Activated naive CD4-positive, alpha-beta T cell treated with anti-CD3 and anti-CD28 coated beads, Interleukin-2, amount 10 ng/mL, durations not matched to agents 7 days and 5 days (primary cell): ENCODE measurements at regions of chr16 and their contacts with region 1.

Region 1: DNA sequence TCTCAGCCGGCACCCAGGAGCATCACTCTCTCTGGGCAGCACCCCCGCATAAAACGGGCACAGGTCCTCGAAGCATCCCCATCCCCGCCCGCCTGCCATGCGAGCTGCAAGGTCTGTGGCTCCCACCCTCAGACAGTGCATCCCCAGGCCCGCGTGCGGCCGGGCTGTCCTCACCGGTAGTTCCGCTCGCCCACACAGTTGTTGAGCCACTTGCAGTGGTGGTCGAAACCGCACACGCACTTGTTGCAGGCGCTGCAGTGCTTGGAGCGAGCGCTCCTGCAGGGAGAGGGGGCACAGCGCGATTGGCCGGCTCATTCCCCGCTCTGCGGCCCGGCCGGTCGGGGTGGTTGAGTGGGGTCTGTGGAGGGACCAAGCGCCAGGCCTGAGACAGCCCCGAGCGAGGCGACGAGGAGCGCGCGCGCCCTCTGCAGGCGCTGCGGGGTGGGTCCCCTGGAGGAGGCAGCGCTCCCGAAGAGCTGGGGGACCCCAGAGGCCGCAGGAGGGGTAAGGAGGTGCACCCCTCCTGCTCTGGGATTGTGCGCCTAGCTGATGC is 6.0 kb upstream of the TPPP3 start:
- DNase-seq: peak; percentile 58
- H3K4me3 Mint-ChIP-seq: no peak overlapping the region
- H3K27ac Mint-ChIP-seq: no peak overlapping the region
- H3K4me1 Mint-ChIP-seq: peaks cover under 1% of the 10 kb centered on the region
- H3K27me3 Mint-ChIP-seq: peaks cover 75% of the 10 kb centered on the region

Region 2: DNA sequence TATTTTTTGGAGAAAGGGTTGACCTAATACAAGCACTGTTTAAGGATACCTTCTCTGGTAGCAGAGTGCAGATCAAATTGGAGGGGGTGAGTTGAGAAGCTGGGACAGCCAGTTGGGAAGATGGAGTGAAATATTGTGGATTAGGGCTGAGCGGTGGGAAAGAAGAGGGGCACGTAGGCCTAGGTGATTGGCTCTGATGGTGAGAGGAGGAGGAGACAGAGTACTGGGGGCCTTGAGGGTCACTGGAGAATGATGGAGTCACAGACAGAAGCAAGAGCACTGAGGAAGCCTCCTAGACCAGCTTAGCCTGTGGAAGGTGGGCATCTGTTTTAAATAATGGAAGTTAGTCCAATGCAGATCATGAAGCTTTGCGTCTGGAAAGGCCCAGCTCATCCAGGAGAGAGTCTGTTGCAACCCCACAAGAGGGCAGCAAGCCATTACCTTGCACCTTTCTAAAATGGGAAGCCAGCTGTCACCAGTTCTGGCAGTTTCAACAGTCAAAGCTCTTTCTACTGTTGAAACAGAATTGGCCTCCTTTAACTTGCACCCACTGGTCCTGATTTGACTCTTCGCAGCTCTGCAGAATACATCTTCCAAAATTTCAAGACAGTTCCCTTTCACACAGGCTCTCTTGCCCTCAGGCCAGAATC is 138.7 kb before region 1 on chr16:
- CTCF ChIA-PET with region 1: interaction called, 27 read pairs
- DNase-seq: peak; percentile 59
- H3K4me3 Mint-ChIP-seq: no peak overlapping the region
- H3K27ac Mint-ChIP-seq: no peak overlapping the region
- H3K4me1 Mint-ChIP-seq: no peaks in the 10 kb centered on the region
- H3K27me3 Mint-ChIP-seq: peaks cover 46% of the 10 kb centered on the region

Region 3: DNA sequence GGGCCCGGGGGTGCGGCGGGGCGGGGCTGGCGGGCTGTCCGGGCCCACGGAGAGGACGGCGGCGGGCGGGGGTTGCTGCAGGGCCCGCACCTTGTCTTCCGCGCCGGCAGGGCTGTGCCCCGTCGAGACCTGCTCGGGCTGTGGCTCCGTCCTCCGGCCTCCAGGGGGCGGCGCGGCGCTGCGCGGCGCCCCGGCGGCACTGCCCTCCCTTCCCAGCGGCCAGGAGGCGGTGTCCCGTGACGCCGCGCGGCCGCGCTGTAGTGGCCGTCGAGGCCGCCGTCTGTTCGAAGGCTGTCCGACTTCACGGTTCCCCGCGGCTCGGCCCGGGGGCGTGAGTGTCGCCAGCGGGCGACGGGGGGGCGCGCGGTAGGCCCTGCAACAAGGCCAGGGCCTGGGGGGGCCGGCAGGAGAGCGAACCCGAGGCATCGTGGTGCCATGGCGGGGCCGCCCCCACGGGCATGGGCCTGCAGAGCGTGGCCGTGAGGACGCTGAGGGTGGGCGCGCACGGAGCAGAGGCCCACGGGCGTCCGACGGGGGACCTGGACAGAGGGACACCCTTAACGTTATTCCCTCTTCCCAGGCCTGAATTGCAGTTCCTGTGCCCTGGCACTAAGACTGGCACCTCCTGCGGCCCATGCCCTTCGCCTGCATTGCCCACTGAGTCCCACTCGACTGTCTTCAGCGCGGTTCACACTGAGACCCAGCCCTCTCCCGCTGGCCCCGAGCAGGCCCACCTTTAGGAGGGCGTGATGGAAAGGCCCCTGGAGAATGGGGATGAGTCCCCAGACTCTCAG is 119.8 kb before region 1 on chr16 and contains the start of gene PLEKHG4:
- CTCF ChIA-PET with region 1: interaction called, 16 read pairs
- DNase-seq: peak; percentile 87
- H3K4me3 Mint-ChIP-seq: peak within 1 kb of the TSS; percentile 81
- H3K27ac Mint-ChIP-seq: peak within 1 kb of the TSS; percentile 73
- H3K4me1 Mint-ChIP-seq: peaks cover 15% of the 10 kb centered on the region
- H3K27me3 Mint-ChIP-seq: no peaks in the 10 kb centered on the region

Region 4: GRCh38 chr16:67284699-67285646 is 114.3 kb before region 1 on chr16:
- CTCF ChIA-PET with region 1: interaction called, 10 read pairs
- DNase-seq: no peak
- H3K4me3 Mint-ChIP-seq: no peak overlapping the region
- H3K27ac Mint-ChIP-seq: no peak overlapping the region
- H3K4me1 Mint-ChIP-seq: peaks cover 6% of the 10 kb centered on the region
- H3K27me3 Mint-ChIP-seq: no peaks in the 10 kb centered on the region

Region 5: GRCh38 chr16:67372664-67373063 is 26.6 kb before region 1 on chr16:
- CTCF ChIA-PET with region 1: interaction called, 18 read pairs
- DNase-seq: no peak
- H3K4me3 Mint-ChIP-seq: no peak overlapping the region
- H3K27ac Mint-ChIP-seq: no peak overlapping the region
- H3K4me1 Mint-ChIP-seq: no peaks in the 10 kb centered on the region
- H3K27me3 Mint-ChIP-seq: peaks cover 17% of the 10 kb centered on the region